SK-N-SH (cell line): ENCODE measurements at regions of chr11 and their contacts with region 1.

Region 1: GRCh38 chr11:1882519-1883238 is 9.0 kb downstream of the PRR33 start:
- DNase-seq: peak; percentile 97
- H3K4me3 ChIP-seq: no peak overlapping the region; a peak in 1 of 4 replicates
- H3K27ac ChIP-seq: peak overlapping the region in 1 of 2 experiments; percentile 72; a peak in 1 of 4 replicates
- H3K4me1 ChIP-seq: peaks cover 0 to 19% of the 10 kb centered on the region in 2 experiments; a peak in 1 of 4 replicates
- H3K27me3 ChIP-seq: no peaks in the 10 kb centered on the region
- CTCF ChIP-seq: peak; percentile 82
- EP300 ChIP-seq: no peak
- RAD21 ChIP-seq: peak; percentile 89

Region 2: GRCh38 chr11:1845561-1846452 is 36.9 kb before region 1 on chr11:
- CTCF ChIA-PET with region 1: interaction called, 22 read pairs
- POLR2A ChIA-PET with region 1: no interaction called
- DNase-seq: no peak
- H3K4me3 ChIP-seq: no peak overlapping the region
- H3K27ac ChIP-seq: no peak overlapping the region
- H3K4me1 ChIP-seq: peaks cover 0 to 2% of the 10 kb centered on the region in 2 experiments; a peak in 1 of 4 replicates
- H3K27me3 ChIP-seq: no peaks in the 10 kb centered on the region
- CTCF ChIP-seq: no peak
- EP300 ChIP-seq: no peak
- RAD21 ChIP-seq: no peak

Region 3: DNA sequence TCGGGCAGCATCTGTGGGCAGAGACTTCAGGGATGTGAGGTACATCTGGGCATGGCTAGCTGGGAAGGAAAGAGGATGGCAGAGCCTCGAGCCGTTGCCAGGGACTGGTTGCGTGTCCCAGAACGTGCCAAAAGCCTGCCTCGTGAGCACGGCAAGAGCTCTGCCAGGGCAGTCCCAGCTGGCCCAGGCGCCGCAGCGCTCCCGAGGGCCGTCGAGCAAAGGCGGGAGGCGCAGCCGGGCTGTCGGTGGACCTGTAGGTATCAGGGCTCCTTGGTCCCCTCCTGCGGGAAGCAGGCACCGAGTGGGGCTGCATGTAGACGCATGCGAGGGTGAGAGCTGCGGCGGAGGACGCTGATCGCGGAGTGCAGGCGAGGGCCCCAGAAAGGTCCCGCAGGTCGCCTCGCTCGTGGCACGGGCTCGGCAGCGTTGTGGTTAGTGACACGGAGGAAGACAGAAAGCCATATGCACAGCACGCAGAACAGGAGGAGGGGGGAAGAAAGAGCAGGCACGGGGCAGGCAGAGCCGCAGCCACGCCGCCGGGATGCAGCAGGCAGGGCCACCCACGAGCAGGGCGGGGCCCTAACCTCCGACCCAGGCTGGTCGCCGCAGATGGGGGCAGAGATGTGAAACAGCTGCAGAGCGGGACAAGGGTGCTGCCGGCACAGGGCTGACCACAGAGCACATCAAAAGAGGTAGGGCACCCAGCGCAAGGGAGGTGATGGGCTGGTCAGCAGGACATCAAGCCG is 11.8 kb before region 1 on chr11:
- CTCF ChIA-PET with region 1: interaction called, 12 read pairs
- POLR2A ChIA-PET with region 1: interaction called, 3 read pairs
- DNase-seq: no peak
- H3K4me3 ChIP-seq: no peak overlapping the region
- H3K27ac ChIP-seq: no peak overlapping the region
- H3K4me1 ChIP-seq: peaks cover 0 to 33% of the 10 kb centered on the region in 2 experiments; a peak in 1 of 4 replicates
- H3K27me3 ChIP-seq: no peaks in the 10 kb centered on the region
- CTCF ChIP-seq: no peak
- EP300 ChIP-seq: no peak
- RAD21 ChIP-seq: no peak

Region 4: DNA sequence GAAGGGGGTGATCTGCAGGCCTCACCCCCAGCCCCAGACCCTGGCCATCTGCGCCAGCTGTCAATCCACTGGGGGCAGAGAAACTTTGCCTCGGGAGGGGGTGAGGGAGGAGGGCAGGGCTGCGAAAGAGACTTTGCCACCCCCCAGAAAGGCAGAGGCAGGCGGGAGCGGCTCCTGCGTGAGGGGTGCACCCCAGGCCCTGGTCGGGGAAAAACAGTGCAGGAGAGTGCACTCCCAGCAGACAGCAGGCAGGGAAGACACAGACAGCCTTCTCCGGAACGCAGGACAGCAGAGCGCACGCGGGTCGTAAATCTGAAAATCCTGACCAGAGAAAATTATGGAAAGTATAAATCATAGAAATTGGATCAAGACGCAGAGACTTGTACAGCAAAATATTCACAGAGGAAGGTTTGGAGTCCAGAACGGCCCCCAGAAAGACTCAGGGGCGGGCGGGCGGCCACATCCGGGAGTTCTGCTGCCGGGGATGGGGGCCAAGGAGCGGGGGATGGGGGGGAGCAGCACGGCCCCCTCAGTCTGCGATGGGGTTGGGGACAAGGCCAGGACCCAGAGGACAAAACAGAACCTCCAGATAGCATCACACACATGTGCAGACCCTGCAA is 56.4 kb after region 1 on chr11:
- CTCF ChIA-PET with region 1: interaction called, 14 read pairs
- POLR2A ChIA-PET with region 1: no interaction called
- DNase-seq: peak; percentile 84
- H3K4me3 ChIP-seq: no peak overlapping the region
- H3K27ac ChIP-seq: 0 out of 4 replicates have a peak overlapping the region, but pooled peaks of 1 of the 2 experiments have one; percentile 26
- H3K4me1 ChIP-seq: peaks cover 0 to 23% of the 10 kb centered on the region in 2 experiments; a peak in 1 of 4 replicates
- H3K27me3 ChIP-seq: no peaks in the 10 kb centered on the region
- CTCF ChIP-seq: no peak
- EP300 ChIP-seq: no peak
- RAD21 ChIP-seq: no peak

Region 5: DNA sequence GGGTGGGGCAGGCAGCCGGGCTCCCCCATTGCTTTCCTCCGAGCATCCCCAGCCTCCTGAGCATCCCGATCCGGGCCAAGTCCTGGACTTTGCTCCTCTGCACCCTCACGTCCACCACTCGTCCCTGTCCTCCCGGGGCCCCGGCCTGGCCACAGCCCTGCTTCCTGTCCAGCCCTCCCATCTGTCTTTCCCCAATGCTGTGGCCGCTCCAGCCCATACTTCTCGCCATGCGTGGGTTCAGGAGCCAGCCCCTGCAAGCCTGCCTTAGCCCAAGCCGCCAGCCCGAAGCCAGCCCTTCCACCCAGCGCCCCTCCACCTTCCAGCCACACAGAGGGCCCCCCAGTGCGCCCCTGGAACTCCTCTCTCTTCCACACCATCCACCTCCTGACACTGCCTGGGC is 88.3 kb after region 1 on chr11:
- CTCF ChIA-PET with region 1: interaction called, 12 read pairs
- POLR2A ChIA-PET with region 1: interaction called, 3 read pairs
- DNase-seq: no peak
- H3K4me3 ChIP-seq: no peak overlapping the region
- H3K27ac ChIP-seq: no peak overlapping the region; a peak in 1 of 4 replicates
- H3K4me1 ChIP-seq: no peaks in the 10 kb centered on the region
- H3K27me3 ChIP-seq: no peaks in the 10 kb centered on the region
- CTCF ChIP-seq: no peak
- EP300 ChIP-seq: no peak
- RAD21 ChIP-seq: no peak

Region 6: DNA sequence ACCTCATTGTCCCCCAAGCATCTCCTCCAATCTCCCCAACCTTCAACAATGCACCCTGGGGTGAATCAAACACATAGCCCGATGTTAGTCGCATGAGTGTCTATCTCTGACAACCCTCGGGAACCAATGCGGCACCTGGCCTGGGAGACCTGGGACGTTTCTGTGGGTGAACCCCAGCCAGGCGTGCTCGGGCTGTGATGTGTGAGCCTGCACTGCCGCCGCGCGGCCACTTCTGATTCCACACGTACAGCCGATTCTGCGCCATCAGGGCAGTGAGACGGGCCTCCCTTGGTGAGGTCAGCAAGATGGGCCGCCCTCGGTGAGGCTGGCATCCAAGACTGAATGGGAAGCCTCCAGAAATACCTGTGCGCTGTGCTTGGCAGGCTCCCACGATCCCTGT is 120.1 kb after region 1 on chr11:
- CTCF ChIA-PET with region 1: interaction called, 53 read pairs
- POLR2A ChIA-PET with region 1: interaction called, 20 read pairs
- DNase-seq: no peak
- H3K4me3 ChIP-seq: no peak overlapping the region
- H3K27ac ChIP-seq: no peak overlapping the region
- H3K4me1 ChIP-seq: no peaks in the 10 kb centered on the region
- H3K27me3 ChIP-seq: no peaks in the 10 kb centered on the region
- CTCF ChIP-seq: no peak
- EP300 ChIP-seq: no peak
- RAD21 ChIP-seq: no peak

Region 7: GRCh38 chr11:2474061-2474901 is 591.6 kb after region 1 on chr11:
- CTCF ChIA-PET with region 1: no interaction called
- POLR2A ChIA-PET with region 1: no interaction called
- DNase-seq: no peak
- H3K4me3 ChIP-seq: no peak overlapping the region
- H3K27ac ChIP-seq: no peak overlapping the region
- H3K4me1 ChIP-seq: peaks cover 0 to 4% of the 10 kb centered on the region in 2 experiments; a peak in 1 of 4 replicates
- H3K27me3 ChIP-seq: no peaks in the 10 kb centered on the region
- CTCF ChIP-seq: no peak
- EP300 ChIP-seq: no peak
- RAD21 ChIP-seq: no peak